Panc1 (cell line): ENCODE measurements at regions of chr15 and their contacts with region 1.

Region 1: GRCh38 chr15:39756806-39757522 is 25.7 kb downstream of the FSIP1 start:
- DNase-seq: peak; percentile 35
- ATAC-seq: no peak
- H3K4me3 ChIP-seq: no peak overlapping the region
- H3K27ac ChIP-seq: no peak overlapping the region
- H3K4me1 ChIP-seq: no peaks in the 10 kb centered on the region
- H3K27me3 ChIP-seq: no peaks in the 10 kb centered on the region
- CTCF ChIP-seq: peak; percentile 72; the same call in 1 of the 2 replicates

Region 2: DNA sequence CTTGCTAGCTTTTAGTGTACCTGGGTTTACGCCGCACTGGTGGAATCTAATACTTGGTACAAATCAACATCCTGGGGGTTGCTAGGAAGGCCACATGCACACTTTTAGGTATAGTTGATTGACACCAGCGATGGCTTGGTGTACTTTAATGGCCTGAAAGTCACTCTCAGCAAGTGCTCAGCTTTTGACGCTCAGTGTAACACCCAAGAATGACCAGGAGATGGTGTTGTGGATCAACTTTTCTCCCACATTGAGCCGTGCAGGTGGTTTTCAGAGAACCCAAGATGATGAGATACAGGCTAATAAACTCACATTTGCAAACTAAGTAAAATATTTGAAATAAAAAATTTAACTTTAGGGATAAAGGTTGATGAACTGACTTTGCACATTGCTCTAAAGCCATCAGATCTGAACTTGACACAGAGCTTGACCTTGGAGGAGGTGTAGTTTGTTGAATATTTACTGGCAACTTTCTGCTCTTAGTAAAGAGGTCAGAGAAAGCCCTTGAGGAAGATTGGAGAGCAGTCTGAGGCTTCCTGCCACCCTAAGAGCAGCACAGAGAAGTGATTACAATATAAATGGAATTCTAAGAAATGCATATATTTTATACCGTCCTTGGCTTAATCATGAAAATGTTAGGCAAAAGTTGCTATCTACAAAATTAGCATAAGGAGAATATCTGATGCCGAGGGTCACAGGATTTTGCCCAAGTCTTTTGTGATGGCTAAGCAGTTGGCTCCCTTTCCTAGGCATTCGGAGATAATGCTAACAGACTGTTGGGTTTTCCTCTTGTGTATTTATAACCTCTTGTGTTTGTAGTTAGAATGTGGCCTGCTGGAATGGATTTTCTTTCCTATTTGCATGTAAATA is 1048.9 kb before region 1 on chr15:
- CTCF ChIA-PET with region 1: interaction called, 3 read pairs
- POLR2A ChIA-PET with region 1: no interaction called
- in situ Hi-C with region 1: no loop called
- intact Hi-C with region 1: loop called (anchors 5 kb)
- DNase-seq: no peak
- ATAC-seq: peak; percentile 98
- H3K4me3 ChIP-seq: no peak overlapping the region
- H3K27ac ChIP-seq: no peak overlapping the region
- H3K4me1 ChIP-seq: no peaks in the 10 kb centered on the region
- H3K27me3 ChIP-seq: peaks cover 2% of the 10 kb centered on the region; the same call in 1 of the 2 replicates
- CTCF ChIP-seq: peak; percentile 79

Region 3: GRCh38 chr15:39594056-39594763 is 162.8 kb before region 1 on chr15:
- CTCF ChIA-PET with region 1: no interaction called
- POLR2A ChIA-PET with region 1: no interaction called
- in situ Hi-C with region 1: no loop called
- intact Hi-C with region 1: loop called (anchors 10 kb)
- DNase-seq: no peak
- ATAC-seq: no peak
- H3K4me3 ChIP-seq: no peak overlapping the region
- H3K27ac ChIP-seq: no peak overlapping the region
- H3K4me1 ChIP-seq: no peaks in the 10 kb centered on the region
- H3K27me3 ChIP-seq: no peaks in the 10 kb centered on the region
- CTCF ChIP-seq: no peak

Region 4: GRCh38 chr15:39686000-39686613 is 70.9 kb before region 1 on chr15:
- CTCF ChIA-PET with region 1: interaction called, 25 read pairs
- POLR2A ChIA-PET with region 1: no interaction called
- in situ Hi-C with region 1: no loop called
- intact Hi-C with region 1: loop called (anchors 1 kb)
- DNase-seq: peak; percentile 13
- ATAC-seq: peak; percentile 84
- H3K4me3 ChIP-seq: no peak overlapping the region
- H3K27ac ChIP-seq: no peak overlapping the region
- H3K4me1 ChIP-seq: no peaks in the 10 kb centered on the region
- H3K27me3 ChIP-seq: no peaks in the 10 kb centered on the region
- CTCF ChIP-seq: peak; percentile 84

Region 5: DNA sequence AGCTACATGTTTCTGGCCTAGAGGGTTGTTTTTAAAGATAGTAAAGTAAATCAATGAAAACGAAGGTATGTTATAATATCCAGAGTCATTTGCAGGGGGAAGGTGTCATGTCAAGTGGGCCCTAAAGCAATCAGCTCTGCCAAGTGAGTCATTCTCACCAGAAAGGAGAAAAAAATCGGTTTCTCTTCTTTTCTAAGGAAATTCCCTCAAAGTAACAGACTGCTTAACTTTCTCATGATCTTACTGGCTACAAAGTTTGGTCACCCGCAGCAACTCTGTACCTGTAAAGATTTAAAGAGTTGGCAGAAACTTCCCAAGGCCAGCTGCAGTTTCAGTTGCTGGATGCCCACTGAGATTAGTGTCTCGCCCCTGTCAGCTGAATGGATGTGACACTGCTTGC is 31.1 kb after region 1 on chr15:
- CTCF ChIA-PET with region 1: no interaction called
- POLR2A ChIA-PET with region 1: no interaction called
- in situ Hi-C with region 1: no loop called
- intact Hi-C with region 1: no loop called
- DNase-seq: no peak
- ATAC-seq: no peak
- H3K4me3 ChIP-seq: no peak overlapping the region
- H3K27ac ChIP-seq: no peak overlapping the region
- H3K4me1 ChIP-seq: peaks cover 31% of the 10 kb centered on the region
- H3K27me3 ChIP-seq: no peaks in the 10 kb centered on the region
- CTCF ChIP-seq: no peak

Region 6: GRCh38 chr15:39908186-39908585 is 151.2 kb after region 1 on chr15:
- CTCF ChIA-PET with region 1: no interaction called
- POLR2A ChIA-PET with region 1: interaction called, 11 read pairs
- in situ Hi-C with region 1: no loop called
- intact Hi-C with region 1: no loop called
- DNase-seq: no peak
- ATAC-seq: peak; percentile 26; the same call in 1 of the 2 replicates
- H3K4me3 ChIP-seq: no peak overlapping the region
- H3K27ac ChIP-seq: no peak overlapping the region
- H3K4me1 ChIP-seq: no peaks in the 10 kb centered on the region
- H3K27me3 ChIP-seq: no peaks in the 10 kb centered on the region
- CTCF ChIP-seq: no peak